PC-9 (cell line): ENCODE measurements at regions of chr12 and their contacts with region 1.

Region 1: GRCh38 chr12:69330475-69331473 is 17.4 kb upstream of the LYZ start:
- DNase-seq: peak in 1 of 2 experiments; percentile 11
- H3K4me3 ChIP-seq: no peak overlapping the region
- H3K27ac ChIP-seq: no peak overlapping the region
- H3K4me1 ChIP-seq: no peaks in the 10 kb centered on the region
- H3K27me3 ChIP-seq: no peaks in the 10 kb centered on the region
- CTCF ChIP-seq: no peak

Region 2: GRCh38 chr12:69639400-69640016 is 308.7 kb after region 1 on chr12:
- CTCF ChIA-PET with region 1: no interaction called
- POLR2A ChIA-PET with region 1: interaction called, 10 read pairs
- intact Hi-C with region 1: no loop called
- DNase-seq: peak in 1 of 2 experiments; percentile 43
- H3K4me3 ChIP-seq: no peak overlapping the region
- H3K27ac ChIP-seq: no peak overlapping the region
- H3K4me1 ChIP-seq: no peaks in the 10 kb centered on the region
- H3K27me3 ChIP-seq: no peaks in the 10 kb centered on the region
- CTCF ChIP-seq: peak; percentile 80